ENCODE measurements at regions of chr11 and their contacts with region 1.

Region 1: DNA sequence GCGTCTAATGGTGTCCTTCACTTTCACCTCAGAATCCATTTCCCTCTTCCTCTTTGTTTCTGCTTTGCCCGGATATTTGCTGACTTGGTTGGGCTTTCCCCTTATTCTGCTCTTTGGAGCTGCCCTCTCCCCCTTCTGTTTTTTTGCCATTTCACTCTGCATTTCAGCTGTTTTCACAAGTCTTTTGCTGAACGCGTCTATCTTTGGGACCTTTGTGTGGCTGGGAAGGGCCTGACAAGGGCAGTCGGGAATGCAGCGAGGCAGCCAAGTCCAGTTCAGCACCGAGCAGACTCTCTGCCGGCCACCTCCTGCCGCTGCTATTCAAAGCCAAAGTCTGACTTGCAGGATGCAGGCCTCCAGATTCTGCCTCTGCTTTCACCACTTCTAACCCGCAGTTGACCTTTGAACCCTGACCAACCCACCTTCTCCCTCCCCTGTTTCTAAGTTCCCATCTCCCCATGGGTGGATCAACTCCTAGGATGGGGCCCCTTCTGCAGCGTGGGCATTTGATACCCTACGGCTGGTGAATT is 38.2 kb downstream of the FEZ1 start:
- DNase-seq: peak; percentile 89 to 90
- ATAC-seq: peak; percentile 86
- H3K4me3 ChIP-seq: no peak overlapping the region
- H3K27ac ChIP-seq: peak overlapping the region in 1 of 2 donors; percentile 75
- H3K4me1 ChIP-seq: no peaks in the 10 kb centered on the region
- H3K27me3 ChIP-seq: no peaks in the 10 kb centered on the region

Region 2: GRCh38 chr11:125494974-125495725 is 37.3 kb after region 1 on chr11:
- intact Hi-C with region 1: loop called in 1 of 2 experiments (anchors 5 kb)
- DNase-seq: peak; percentile 62 to 89
- ATAC-seq: peak; percentile 82
- H3K4me3 ChIP-seq: peak overlapping the region; percentile 64 to 97
- H3K27ac ChIP-seq: peak overlapping the region in 1 of 2 donors; percentile 83
- H3K4me1 ChIP-seq: no peaks in the 10 kb centered on the region
- H3K27me3 ChIP-seq: no peaks in the 10 kb centered on the region

Region 3: DNA sequence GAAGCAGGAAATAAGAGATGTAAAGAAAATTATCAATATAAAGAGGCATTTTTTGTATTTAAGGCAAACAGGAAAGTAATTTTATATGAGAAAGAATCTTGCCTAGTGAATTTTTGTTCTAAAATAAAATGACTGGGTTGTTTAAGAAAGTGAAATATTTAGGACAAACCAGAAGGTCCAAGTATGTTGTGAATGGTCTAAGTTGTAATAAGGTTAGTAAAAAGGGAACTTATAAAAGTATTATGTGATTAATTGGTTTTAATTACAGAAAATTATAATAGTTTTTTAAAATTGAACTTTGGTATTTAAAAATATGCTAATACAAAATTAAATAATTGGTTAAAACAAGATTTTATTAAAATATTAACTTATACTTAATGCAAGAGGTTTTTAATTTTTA is 84.8 kb after region 1 on chr11:
- intact Hi-C with region 1: no loop called
- DNase-seq: no peak
- ATAC-seq: no peak
- H3K4me3 ChIP-seq: no peak overlapping the region
- H3K27ac ChIP-seq: no peak overlapping the region
- H3K4me1 ChIP-seq: no peaks in the 10 kb centered on the region
- H3K27me3 ChIP-seq: no peaks in the 10 kb centered on the region

Measured in aorta (tissue), 5 donors.